ENCODE measurements at regions of chr7 and their contacts with region 1.

Region 1: DNA sequence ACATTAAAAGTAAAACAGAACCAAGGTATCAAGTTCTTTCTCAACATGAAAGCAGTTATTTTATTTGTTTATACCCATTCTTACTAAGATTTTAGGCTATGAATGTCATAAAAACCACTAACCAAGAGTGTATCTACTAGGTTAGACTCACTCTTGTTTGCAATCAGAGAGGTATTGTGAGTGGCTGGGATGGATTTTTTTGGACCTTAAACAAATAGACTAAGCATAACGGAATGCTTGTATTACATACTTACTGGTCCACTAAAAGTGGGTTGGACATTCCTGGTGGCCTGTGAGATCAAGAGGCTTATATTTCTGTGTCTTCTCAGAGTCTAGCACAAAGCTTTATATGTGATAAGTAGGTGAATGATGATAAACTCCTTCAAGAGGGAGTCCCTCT is 32.6 kb upstream of the CBLL1 start:
- ATAC-seq: no peak
- H3K4me3 ChIP-seq: no peak overlapping the region
- H3K27ac ChIP-seq: no peak overlapping the region
- H3K4me1 ChIP-seq: no peaks in the 10 kb centered on the region

Region 2: GRCh38 chr7:107180378-107180777 is 530.9 kb before region 1 on chr7:
- in situ Hi-C with region 1: loop called in 1 of 9 experiments (anchors 25 kb)
- ATAC-seq: peak in 2 of 8 experiments; percentile 45 to 49
- H3K4me3 ChIP-seq: no peak overlapping the region
- H3K27ac ChIP-seq: no peak overlapping the region
- H3K4me1 ChIP-seq: no peaks in the 10 kb centered on the region

Region 3: GRCh38 chr7:107658467-107658866 is 52.8 kb before region 1 on chr7:
- in situ Hi-C with region 1: no loop called
- ATAC-seq: no peak
- H3K4me3 ChIP-seq: no peak overlapping the region
- H3K27ac ChIP-seq: no peak overlapping the region
- H3K4me1 ChIP-seq: no peaks in the 10 kb centered on the region

Measured in motor neuron (in vitro differentiated cells).